Tibial artery (tissue), 4 donors: ENCODE measurements at regions of chr3 and their contacts with region 1.

Region 1: GRCh38 chr3:142828703-142829305 is 60.1 kb downstream of the PCOLCE2 start:
- DNase-seq: peak; percentile 81 to 85
- H3K4me3 ChIP-seq: no peak overlapping the region
- H3K27ac ChIP-seq: no peak overlapping the region
- H3K4me1 ChIP-seq: no peaks in the 10 kb centered on the region
- H3K27me3 ChIP-seq: no peaks in the 10 kb centered on the region
- CTCF ChIP-seq: peak; percentile 67 to 75

Region 2: GRCh38 chr3:142981108-142981507 is 152.3 kb after region 1 on chr3:
- intact Hi-C with region 1: loop called (anchors 5 kb)
- DNase-seq: no peak
- H3K4me3 ChIP-seq: no peak overlapping the region
- H3K27ac ChIP-seq: no peak overlapping the region
- H3K4me1 ChIP-seq: peaks cover 0 to 6% (median 2%) of the 10 kb centered on the region in 4 donors
- H3K27me3 ChIP-seq: peaks cover 0 to 11% of the 10 kb centered on the region in 2 donors
- CTCF ChIP-seq: no peak